MCF 10A (cell line): ENCODE measurements at regions of chr1 and their contacts with region 1.

Region 1: DNA sequence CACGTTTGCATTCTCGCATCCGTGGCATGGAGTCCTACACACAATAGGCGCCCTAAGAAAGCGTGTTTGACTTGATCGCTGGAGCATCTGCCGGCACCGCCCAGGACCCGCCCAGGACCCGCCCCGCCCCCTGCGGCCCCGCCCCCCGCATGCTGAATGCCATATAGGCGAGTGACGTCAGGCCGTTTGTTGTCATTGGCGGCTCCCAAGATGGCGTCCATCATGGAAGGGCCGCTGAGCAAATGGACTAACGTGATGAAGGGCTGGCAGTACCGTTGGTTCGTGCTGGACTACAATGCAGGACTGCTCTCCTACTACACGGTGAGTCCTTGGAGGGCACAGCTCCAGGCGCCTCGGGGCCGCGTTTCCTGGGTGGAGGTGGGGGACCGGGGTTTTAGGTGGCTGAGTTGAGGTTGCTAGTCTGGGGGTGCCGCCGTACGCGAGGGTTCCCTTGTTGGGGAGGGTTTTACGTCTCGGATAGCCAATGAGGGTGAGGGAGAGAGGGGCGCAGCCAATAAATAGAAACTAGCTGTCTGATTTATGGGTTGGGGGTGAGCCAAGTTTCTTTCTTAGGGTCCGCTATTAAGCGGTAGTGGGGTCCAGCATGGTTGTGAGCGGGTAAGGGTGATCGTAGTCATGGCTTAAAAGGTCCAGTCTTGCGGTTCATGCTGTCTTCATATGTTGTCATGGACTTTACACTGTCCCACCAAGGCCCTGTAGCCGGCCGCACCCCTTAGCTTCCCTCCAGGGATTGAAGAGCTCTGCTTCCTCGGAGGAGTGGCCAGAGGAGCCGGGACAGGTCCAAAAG is at the start of gene OSBPL9:
- DNase-seq: peak; percentile 92
- H3K4me3 Mint-ChIP-seq: peak within 1 kb of the TSS; percentile 97
- H3K27ac Mint-ChIP-seq: peak within 1 kb of the TSS; percentile 98
- H3K4me1 Mint-ChIP-seq: peaks cover 39% of the 10 kb centered on the region
- H3K27me3 Mint-ChIP-seq: no peaks in the 10 kb centered on the region
- CTCF ChIP-seq: no peak
- total RNA-seq, gene OSBPL9: 51.7 and 60.4 TPM in 2 replicates

Region 2: DNA sequence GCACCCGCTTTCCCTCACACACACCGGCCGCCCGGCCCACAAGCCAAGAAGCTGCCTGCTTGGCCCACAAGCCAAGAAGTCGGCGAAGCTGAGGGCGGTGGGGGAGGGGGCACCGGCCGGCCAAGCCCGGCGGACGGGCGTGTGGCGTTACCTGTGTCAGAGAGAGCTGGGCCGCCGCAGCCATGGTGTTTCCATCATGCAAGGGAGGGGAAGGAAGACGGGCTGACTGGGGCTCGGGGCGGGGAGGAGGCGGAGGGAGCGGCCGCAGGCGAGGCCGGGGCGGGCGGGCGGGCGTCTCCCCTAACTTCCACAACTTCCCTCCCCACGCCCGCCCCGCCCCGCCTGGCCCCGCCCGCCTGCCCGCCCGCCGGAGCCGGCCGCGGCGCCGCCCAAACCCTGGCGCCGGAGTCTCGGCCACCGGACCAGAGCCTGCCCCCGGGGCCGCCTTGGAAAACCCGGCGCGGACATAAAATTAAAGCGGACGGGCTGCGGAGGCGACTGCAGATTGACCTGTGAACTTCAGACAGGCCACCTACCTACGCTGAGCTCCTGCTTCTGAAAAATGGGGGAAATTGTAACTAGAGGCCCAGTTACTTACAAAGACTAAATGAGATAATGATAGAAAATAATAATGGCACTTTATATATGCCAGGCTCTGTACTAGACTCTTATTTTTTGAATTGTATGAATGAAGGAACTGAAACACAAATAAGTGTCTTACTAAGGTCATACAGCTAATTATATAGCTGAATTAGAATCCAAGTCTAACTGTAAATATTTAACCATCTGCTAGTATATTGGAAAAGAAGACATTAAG is 97.8 kb before region 1 on chr1 and contains the start of gene EPS15:
- CTCF ChIA-PET with region 1: no interaction called
- POLR2A ChIA-PET with region 1: interaction called, 14 read pairs
- intact Hi-C with region 1: no loop called
- DNase-seq: peak; percentile 87
- H3K4me3 Mint-ChIP-seq: peak within 1 kb of the TSS; percentile 79
- H3K27ac Mint-ChIP-seq: peak within 1 kb of the TSS; percentile 93
- H3K4me1 Mint-ChIP-seq: peaks cover 17% of the 10 kb centered on the region
- H3K27me3 Mint-ChIP-seq: no peaks in the 10 kb centered on the region
- CTCF ChIP-seq: no peak
- total RNA-seq, gene EPS15: 48.2 and 48.7 TPM in 2 replicates

Region 3: DNA sequence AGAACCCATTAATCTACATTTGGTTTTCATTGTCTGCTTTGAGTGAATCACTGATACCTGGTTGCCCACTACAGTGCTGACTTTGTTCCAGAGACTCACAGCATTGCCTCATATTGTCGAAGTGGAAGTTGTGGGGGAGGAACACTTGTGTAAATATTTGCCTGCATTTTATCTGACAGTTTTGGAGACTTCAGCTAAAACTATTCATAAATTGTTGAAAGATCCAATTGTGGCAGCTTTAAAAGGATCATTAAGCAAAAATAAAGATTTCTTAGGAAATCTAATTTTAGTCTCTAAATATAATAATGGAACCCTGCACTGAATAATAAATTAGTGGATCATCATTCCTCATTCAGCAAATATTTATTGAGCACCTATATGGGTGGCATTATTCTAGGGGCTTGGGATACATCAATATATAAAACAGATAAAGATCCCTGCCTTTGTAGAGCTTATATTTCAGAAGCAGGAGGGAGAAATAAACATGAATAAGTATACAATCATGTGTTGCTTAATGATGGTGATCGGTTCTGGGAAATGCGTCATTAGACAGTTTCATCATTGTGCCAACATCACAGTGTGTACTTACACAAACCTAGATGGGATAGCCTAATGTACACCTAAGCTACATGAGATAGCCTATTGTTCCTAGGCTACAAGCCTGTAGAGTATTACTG is 73.3 kb after region 1 on chr1:
- CTCF ChIA-PET with region 1: no interaction called
- POLR2A ChIA-PET with region 1: interaction called, 11 read pairs
- intact Hi-C with region 1: no loop called
- DNase-seq: peak; percentile 95
- H3K4me3 Mint-ChIP-seq: peak overlapping the region; percentile 26
- H3K27ac Mint-ChIP-seq: peak overlapping the region; percentile 68
- H3K4me1 Mint-ChIP-seq: peaks cover 51% of the 10 kb centered on the region
- H3K27me3 Mint-ChIP-seq: no peaks in the 10 kb centered on the region
- CTCF ChIP-seq: no peak